Activated T-helper 2 cell treated with anti-CD3 and anti-CD28 coated beads, Interferon-gamma antibody, Interleukin-2, Interleukin-4, amounts not matched to agents 10 μg/mL and 5 μg/mL and 100 μg/mL, durations not matched to agents 14 hours and 24 hours and 36 hours (primary cell): ENCODE measurements at regions of chr14 and their contacts with region 1.

Region 1: DNA sequence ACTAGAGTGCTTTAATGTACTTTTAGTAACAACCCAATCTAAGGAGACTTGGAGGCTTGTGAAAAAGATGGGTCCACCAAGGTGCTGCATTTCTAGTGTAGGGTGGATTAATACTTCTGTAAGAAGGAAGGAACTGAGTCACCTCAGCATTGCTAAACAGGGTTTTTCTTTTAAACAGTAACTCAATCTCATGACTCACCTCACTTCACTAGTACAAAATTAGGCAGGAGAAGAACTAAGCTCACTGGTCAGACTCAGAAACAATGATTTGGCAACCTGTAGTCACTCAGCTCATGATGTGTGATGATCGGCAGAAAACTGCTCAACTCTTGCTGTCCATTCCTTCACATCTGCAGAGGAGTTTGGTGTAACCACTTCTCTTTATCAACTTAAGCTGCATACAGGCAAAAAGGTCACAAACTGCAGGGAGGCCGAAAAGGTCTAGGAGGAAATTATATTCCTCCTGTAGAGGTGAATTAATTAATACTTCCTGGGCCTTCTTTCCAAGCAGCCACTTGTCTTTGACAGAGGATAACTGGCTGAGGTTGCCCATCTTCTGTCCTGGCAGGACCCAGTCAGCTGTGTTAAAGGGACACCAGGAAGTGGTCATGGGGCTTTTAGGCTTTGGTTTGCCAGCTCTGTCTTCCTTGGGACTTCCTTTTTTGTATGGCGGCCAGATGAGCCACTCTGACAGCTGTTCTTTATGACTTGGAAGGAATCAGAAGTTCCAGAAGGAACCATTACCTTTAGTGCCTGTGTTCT is 466.9 kb downstream of the FUT8 start:
- DNase-seq: no peak
- H3K4me3 Mint-ChIP-seq: no peak overlapping the region
- H3K27ac Mint-ChIP-seq: no peak overlapping the region
- H3K4me1 Mint-ChIP-seq: peaks cover 32% of the 10 kb centered on the region
- H3K27me3 Mint-ChIP-seq: peaks cover 2% of the 10 kb centered on the region

Region 2: DNA sequence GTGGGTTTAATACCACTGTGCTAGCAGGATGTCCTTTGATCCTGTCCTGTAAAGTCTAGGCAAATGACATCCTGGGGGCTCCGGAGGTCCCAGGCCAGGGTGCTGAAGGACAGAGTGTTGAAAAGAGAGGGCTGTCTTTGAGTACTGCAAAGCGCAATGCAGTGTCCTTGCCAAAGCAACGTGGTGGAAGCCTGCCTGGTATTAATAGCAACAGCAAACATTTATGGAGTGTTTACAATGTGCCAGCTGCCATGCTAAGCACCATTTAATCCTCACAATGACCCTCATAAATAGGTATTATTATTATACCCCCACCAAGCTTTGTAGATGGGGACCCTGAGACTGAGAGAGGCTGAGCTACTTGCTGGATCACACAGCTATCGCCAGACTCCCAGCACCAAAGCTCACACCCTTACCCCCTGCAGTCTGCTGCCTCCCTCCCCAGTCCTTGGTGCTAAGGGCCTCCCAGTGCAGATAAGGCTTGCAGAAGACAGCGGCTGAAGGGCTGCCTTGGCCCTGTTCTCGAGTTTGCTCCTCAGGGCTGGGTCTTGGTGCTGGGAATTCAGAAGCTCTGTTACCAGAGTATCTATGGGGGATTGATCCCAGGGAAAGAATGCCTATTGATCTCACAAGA is 39.2 kb before region 1 on chr14:
- intact Hi-C with region 1: loop called (anchors 5 kb)
- DNase-seq: no peak
- H3K4me3 Mint-ChIP-seq: no peak overlapping the region
- H3K27ac Mint-ChIP-seq: no peak overlapping the region
- H3K4me1 Mint-ChIP-seq: peaks cover 62% of the 10 kb centered on the region
- H3K27me3 Mint-ChIP-seq: no peaks in the 10 kb centered on the region

Region 3: GRCh38 chr14:66045572-66046021 is 166.2 kb after region 1 on chr14:
- intact Hi-C with region 1: no loop called
- DNase-seq: no peak
- H3K4me3 Mint-ChIP-seq: no peak overlapping the region
- H3K27ac Mint-ChIP-seq: no peak overlapping the region
- H3K4me1 Mint-ChIP-seq: no peaks in the 10 kb centered on the region
- H3K27me3 Mint-ChIP-seq: peaks cover 32% of the 10 kb centered on the region

Region 4: DNA sequence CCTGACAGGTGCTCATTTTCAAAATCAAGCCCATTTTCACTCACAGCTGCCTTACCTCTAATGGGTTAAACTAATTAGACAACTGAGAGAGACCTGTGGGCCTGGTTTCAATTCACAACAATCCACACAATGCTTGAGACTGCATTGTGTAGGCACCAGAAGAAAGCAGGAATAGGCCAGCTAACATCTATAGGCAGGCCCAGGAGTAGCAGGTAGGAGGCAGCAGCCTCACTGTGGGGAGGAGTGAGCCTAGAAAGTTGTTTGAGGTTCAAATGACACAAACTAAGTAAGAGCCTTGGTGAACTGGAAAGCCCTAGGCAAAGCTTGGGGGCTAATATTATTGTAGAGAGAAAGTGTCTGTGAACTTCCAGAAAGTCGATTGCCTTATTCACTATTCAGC is 317.2 kb after region 1 on chr14:
- intact Hi-C with region 1: no loop called
- DNase-seq: no peak
- H3K4me3 Mint-ChIP-seq: no peak overlapping the region
- H3K27ac Mint-ChIP-seq: no peak overlapping the region
- H3K4me1 Mint-ChIP-seq: no peaks in the 10 kb centered on the region
- H3K27me3 Mint-ChIP-seq: peaks cover 5% of the 10 kb centered on the region